Endothelial cell of umbilical vein (primary cell): ENCODE measurements at regions of chr15 and their contacts with region 1.

Region 1: GRCh38 chr15:52735231-52736089 is 54.7 kb downstream of the ONECUT1 start:
- DNase-seq: peak; percentile 85
- H3K4me3 ChIP-seq: no peak overlapping the region
- H3K27ac ChIP-seq: no peak overlapping the region
- H3K4me1 ChIP-seq: peaks cover 11% of the 10 kb centered on the region
- H3K27me3 ChIP-seq: peaks cover 0 to 2% of the 10 kb centered on the region in 2 experiments
- CTCF ChIP-seq: peak; percentile 39 to 62
- POLR2A ChIP-seq: no peak

Region 2: DNA sequence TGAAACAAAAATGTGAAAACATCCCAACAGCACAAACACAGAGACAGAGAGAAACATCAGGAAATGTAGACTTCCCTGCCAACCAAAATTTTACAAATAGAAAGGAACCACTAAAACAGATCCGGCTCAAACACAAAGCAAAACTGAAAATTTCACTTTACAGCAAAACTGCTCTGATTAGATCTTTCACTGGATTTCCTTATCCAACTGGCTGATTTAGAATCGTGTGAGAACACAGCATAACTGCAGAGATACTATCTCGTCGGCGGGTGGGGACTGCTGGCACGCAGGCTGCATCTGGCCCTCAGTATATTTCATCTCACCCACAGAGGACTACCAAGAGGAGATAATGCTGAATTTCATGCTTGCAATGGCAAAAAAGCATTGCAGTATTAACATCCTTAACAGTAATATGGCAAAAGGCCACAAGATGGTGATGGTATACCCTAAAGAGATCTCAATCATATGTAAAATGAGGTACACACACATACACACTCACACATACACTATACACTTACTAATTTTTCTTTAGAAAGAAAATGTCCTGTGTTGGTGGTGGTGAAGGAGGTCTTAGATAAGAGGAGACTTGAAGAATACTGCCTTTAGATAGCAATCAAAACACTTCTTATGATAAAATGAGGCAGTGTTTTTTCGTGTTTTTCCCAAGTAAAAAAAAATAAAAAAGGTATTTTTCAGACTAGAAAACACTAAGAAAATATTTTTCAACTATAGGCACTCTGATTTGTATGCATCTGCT is 753.3 kb before region 1 on chr15:
- CTCF ChIA-PET with region 1: interaction called, 4 read pairs
- POLR2A ChIA-PET with region 1: no interaction called
- dilution Hi-C with region 1: no loop called
- intact Hi-C with region 1: loop called (anchors 10 kb)
- DNase-seq: peak; percentile 94
- H3K4me3 ChIP-seq: peak overlapping the region; percentile 5 to 77 (median 10)
- H3K27ac ChIP-seq: peak overlapping the region; percentile 96
- H3K4me1 ChIP-seq: peaks cover 20% of the 10 kb centered on the region
- H3K27me3 ChIP-seq: no peaks in the 10 kb centered on the region
- CTCF ChIP-seq: peak in 1 of 2 donors; percentile 56
- POLR2A ChIP-seq: peak; percentile 38

Region 3: DNA sequence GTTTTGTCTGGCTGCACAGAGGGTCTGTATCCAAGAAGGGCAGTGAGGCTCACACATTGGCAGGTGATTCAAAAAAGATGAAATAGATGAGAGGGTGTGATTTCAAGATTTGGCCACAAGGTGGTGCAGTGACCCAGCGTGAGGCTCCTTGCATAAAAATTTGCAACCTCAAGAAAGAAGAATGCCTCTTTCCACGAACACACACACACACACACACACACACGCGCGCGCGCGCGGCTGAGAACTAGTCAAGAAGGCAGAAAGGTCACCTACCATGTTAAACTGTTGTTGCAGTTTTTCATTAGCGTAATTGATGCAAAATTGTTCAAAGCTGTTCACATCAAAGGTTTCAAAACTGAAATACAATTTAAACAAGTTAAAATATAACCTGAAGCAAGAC is 479.1 kb before region 1 on chr15:
- CTCF ChIA-PET with region 1: interaction called, 133 read pairs
- POLR2A ChIA-PET with region 1: no interaction called
- dilution Hi-C with region 1: no loop called
- intact Hi-C with region 1: loop called (anchors 1 kb)
- DNase-seq: peak; percentile 90
- H3K4me3 ChIP-seq: no peak overlapping the region
- H3K27ac ChIP-seq: no peak overlapping the region
- H3K4me1 ChIP-seq: peaks cover 33% of the 10 kb centered on the region
- H3K27me3 ChIP-seq: no peaks in the 10 kb centered on the region
- CTCF ChIP-seq: peak; percentile 69
- POLR2A ChIP-seq: no peak

Region 4: DNA sequence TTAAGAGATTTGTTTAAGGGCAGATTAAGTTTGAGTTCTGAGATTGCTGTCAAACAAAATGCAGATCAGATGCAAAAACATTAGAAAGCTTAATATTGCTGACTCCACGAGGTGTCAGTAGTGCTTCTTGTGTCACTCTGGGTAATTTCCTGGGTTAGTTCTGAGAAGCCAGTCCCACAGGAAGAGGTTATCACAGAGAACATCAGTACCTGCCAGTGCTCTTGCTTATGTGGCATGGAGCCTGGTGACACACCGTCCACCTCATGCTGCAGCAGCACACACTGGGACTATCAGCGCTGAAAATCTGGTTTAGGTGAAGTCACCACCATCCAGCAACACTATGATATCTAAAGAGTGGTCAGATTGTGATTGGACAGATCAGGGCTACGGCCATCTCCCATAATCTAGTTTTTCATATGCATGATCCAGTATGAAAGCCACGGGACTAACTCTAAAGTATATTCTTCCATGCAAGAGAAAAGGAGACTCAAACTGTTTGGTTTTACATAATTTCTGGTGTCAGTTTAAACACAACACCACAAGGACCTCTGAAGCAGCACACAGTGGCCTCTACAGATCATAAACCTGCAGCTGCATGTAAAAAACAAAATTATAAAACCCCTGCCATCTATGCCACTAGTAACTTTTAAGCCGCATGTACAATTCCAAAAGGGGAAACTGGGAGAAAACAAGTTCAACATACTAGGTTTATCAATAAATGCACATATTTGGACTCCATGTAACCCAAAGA is 403.8 kb before region 1 on chr15:
- CTCF ChIA-PET with region 1: interaction called, 52 read pairs
- POLR2A ChIA-PET with region 1: interaction called, 6 read pairs
- dilution Hi-C with region 1: no loop called
- intact Hi-C with region 1: loop called (anchors 1 kb)
- DNase-seq: peak; percentile 68
- H3K4me3 ChIP-seq: no peak overlapping the region
- H3K27ac ChIP-seq: no peak overlapping the region
- H3K4me1 ChIP-seq: peaks cover 6% of the 10 kb centered on the region
- H3K27me3 ChIP-seq: no peaks in the 10 kb centered on the region
- CTCF ChIP-seq: peak; percentile 36 to 45
- POLR2A ChIP-seq: no peak

Region 5: DNA sequence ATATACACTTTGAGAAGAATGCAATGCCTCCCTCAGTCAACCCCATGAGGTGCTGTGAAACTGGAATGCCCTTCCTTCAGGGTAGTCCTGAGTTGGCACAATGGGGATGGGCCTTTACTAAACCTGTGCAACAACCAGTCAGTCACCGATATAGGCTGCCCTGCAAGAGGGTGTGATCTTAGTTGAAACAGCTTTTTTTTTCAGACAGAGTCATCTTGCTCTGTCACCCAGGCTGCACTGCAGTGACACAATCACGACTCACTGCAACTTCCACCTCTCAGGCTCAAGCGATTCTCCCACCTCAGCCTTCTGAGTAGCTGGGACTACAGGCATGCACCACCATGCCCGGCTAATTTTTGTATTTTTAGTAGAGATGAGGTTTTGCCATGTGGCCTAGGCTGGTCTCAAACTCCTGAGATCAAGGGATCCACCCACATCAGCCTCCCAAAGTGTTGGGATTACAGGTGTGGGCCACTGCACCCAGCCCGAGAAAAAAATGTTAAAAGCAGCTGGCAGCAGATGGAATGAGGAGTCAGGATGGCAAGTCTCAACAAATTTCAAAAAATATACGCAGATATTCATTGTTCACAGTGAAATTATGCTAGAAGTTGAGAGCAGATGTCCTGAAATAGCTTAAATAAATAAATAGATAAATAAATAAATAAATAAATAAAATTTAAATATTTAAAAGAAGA is 238.5 kb before region 1 on chr15:
- CTCF ChIA-PET with region 1: no interaction called
- POLR2A ChIA-PET with region 1: no interaction called
- dilution Hi-C with region 1: no loop called
- intact Hi-C with region 1: loop called (anchors 10 kb)
- DNase-seq: peak; percentile 62
- H3K4me3 ChIP-seq: no peak overlapping the region
- H3K27ac ChIP-seq: peak overlapping the region; percentile 27
- H3K4me1 ChIP-seq: peaks cover 59% of the 10 kb centered on the region
- H3K27me3 ChIP-seq: no peaks in the 10 kb centered on the region
- CTCF ChIP-seq: no peak
- POLR2A ChIP-seq: no peak

Region 6: DNA sequence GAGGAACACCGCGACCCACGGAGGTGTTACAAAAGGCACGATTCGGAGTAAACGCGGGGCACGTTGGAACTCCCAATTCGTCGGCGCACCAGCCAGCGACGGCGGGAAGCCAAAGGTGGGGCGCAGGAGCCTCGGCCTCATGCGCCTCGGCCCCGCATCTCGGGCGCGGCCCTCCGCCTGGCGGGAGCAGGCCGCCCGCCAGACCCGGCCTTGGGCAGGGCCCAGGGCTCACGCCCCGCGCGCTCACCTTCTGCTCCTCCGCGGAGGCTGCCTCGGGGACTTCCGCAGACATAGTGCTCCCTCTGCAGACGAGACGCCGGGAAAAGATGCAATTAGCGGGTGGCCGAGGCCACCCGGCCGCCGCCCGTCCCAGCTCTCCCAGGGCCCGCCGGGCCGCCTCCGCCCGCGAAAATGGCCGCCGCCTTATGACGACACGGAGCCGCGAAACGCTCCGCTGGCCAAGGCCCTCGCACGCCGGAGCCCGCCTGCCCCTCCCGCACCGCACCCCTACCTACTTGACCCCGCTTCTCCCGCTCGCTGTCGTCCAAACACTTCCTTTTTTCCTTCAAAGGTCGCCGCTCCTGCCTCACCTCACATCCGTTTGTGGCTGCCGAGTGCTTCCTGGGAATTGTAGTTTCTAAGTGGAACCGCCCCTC is 166.7 kb before region 1 on chr15 and contains the start of gene ARPP19:
- CTCF ChIA-PET with region 1: no interaction called
- POLR2A ChIA-PET with region 1: no interaction called
- dilution Hi-C with region 1: no loop called
- intact Hi-C with region 1: loop called (anchors 1 kb)
- DNase-seq: peak; percentile 86
- H3K4me3 ChIP-seq: peak within 1 kb of the TSS; percentile 45 to 79 (median 75)
- H3K27ac ChIP-seq: peak within 1 kb of the TSS; percentile 80
- H3K4me1 ChIP-seq: peaks cover 24% of the 10 kb centered on the region
- H3K27me3 ChIP-seq: no peaks in the 10 kb centered on the region
- CTCF ChIP-seq: no peak
- POLR2A ChIP-seq: peak; percentile 88
- total RNA-seq, gene ARPP19: 176 and 191 TPM in 2 replicates

Region 7: GRCh38 chr15:52778457-52778856 is 43.0 kb after region 1 on chr15:
- CTCF ChIA-PET with region 1: no interaction called
- POLR2A ChIA-PET with region 1: no interaction called
- dilution Hi-C with region 1: no loop called
- intact Hi-C with region 1: no loop called
- DNase-seq: no peak
- H3K4me3 ChIP-seq: no peak overlapping the region
- H3K27ac ChIP-seq: no peak overlapping the region
- H3K4me1 ChIP-seq: peaks cover 1% of the 10 kb centered on the region
- H3K27me3 ChIP-seq: peaks cover 30 to 59% of the 10 kb centered on the region in 2 experiments
- CTCF ChIP-seq: no peak
- POLR2A ChIP-seq: no peak